HepG2 (cell line): ENCODE measurements at regions of chr1 and their contacts with region 1.

Region 1: DNA sequence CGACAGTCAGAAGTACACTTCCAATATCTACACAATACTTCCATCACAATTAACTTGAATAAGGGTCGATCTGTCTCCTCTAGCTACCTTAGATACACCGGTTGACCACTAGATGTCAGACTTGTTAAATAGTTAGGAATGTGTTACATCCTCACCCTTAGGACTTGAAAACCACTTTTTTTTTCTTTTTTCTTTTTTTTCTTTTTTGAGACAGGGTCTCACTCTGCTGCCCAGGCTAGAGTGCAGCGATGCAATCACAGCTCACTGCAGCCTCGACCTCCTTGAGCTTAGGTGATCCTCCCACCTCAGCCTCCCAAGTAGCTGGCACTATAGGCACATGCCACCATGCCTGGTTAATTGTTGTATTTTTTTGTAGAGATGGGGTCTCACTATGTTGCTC is 120.4 kb upstream of the GREM2 start:
- DNase-seq: peak; percentile 53
- ATAC-seq: peak; percentile 94
- H3K4me3 ChIP-seq: no peak overlapping the region
- H3K27ac ChIP-seq: no peak overlapping the region
- H3K4me1 ChIP-seq: no peaks in the 10 kb centered on the region
- H3K27me3 ChIP-seq: no peaks in the 10 kb centered on the region
- CTCF ChIP-seq: peak; percentile 68
- EP300 ChIP-seq: no peak
- POLR2A ChIP-seq: no peak
- RAD21 ChIP-seq: no peak

Region 2: GRCh38 chr1:240946926-240947325 is 214.5 kb after region 1 on chr1:
- CTCF ChIA-PET with region 1: interaction called, 8 read pairs
- POLR2A ChIA-PET with region 1: no interaction called
- in situ Hi-C with region 1: loop called (anchors 5 kb)
- intact Hi-C with region 1: loop called (anchors 1 kb)
- DNase-seq: peak; percentile 16
- ATAC-seq: peak; percentile 87
- H3K4me3 ChIP-seq: no peak overlapping the region
- H3K27ac ChIP-seq: no peak overlapping the region
- H3K4me1 ChIP-seq: no peaks in the 10 kb centered on the region
- H3K27me3 ChIP-seq: no peaks in the 10 kb centered on the region
- CTCF ChIP-seq: peak; percentile 52
- EP300 ChIP-seq: no peak
- POLR2A ChIP-seq: no peak
- RAD21 ChIP-seq: 0 out of 2 replicates have a peak, but pooled peaks have one; percentile 11

Region 3: DNA sequence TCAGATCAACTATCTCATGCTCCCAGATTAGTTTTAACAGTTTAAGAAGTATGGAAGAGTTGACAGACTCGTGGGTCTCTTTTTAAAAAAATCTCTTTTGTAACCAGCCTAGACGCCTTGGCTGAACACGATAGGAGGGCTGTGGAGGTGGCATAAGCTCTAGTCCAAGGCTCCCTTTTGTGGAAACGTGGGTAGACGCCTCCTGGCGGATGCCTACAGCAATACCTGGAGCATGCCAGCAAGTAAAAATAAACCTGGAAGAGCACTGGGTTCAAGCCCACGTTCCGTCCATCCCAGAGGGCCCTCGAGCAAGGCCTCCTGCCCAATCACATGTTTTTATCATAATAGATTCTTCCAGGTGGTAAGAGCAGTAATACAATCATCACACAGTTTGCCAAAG is 536.7 kb after region 1 on chr1:
- CTCF ChIA-PET with region 1: no interaction called
- POLR2A ChIA-PET with region 1: no interaction called
- in situ Hi-C with region 1: no loop called
- intact Hi-C with region 1: loop called (anchors 2 kb)
- DNase-seq: peak; percentile 2
- ATAC-seq: peak; percentile 69
- H3K4me3 ChIP-seq: no peak overlapping the region
- H3K27ac ChIP-seq: no peak overlapping the region
- H3K4me1 ChIP-seq: no peaks in the 10 kb centered on the region
- H3K27me3 ChIP-seq: no peaks in the 10 kb centered on the region
- CTCF ChIP-seq: peak; percentile 53
- EP300 ChIP-seq: no peak
- POLR2A ChIP-seq: no peak
- RAD21 ChIP-seq: no peak

Region 4: DNA sequence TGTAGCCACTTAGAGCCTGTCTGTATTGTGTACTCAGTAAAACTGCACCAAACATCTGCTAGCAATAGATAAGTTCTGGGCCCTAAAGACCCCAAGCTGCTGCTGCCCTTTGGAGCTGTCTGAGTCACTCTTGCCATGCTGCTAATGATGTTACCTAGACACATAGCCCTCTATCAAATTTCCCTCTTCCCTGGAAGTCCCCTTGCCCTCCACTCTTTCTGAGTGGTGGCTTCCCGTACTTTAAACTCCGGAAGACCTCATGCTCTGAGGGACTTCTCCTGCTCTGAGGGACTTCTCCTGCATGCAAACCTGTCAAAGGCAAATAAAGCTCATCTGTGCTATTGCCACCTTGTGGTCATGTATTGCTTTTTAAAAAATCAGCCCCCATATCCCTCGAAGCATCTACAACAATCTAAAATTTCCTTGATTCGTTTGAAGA is 753.2 kb after region 1 on chr1:
- CTCF ChIA-PET with region 1: interaction called, 7 read pairs
- POLR2A ChIA-PET with region 1: no interaction called
- in situ Hi-C with region 1: loop called (anchors 10 kb)
- intact Hi-C with region 1: loop called (anchors 1 kb)
- DNase-seq: peak; percentile 25
- ATAC-seq: peak; percentile 88
- H3K4me3 ChIP-seq: no peak overlapping the region
- H3K27ac ChIP-seq: no peak overlapping the region
- H3K4me1 ChIP-seq: no peaks in the 10 kb centered on the region
- H3K27me3 ChIP-seq: no peaks in the 10 kb centered on the region
- CTCF ChIP-seq: peak; percentile 59
- EP300 ChIP-seq: no peak
- POLR2A ChIP-seq: no peak
- RAD21 ChIP-seq: no peak